Endothelial cell of umbilical vein (primary cell): ENCODE measurements at regions of chr11 and their contacts with region 1.

Region 1: DNA sequence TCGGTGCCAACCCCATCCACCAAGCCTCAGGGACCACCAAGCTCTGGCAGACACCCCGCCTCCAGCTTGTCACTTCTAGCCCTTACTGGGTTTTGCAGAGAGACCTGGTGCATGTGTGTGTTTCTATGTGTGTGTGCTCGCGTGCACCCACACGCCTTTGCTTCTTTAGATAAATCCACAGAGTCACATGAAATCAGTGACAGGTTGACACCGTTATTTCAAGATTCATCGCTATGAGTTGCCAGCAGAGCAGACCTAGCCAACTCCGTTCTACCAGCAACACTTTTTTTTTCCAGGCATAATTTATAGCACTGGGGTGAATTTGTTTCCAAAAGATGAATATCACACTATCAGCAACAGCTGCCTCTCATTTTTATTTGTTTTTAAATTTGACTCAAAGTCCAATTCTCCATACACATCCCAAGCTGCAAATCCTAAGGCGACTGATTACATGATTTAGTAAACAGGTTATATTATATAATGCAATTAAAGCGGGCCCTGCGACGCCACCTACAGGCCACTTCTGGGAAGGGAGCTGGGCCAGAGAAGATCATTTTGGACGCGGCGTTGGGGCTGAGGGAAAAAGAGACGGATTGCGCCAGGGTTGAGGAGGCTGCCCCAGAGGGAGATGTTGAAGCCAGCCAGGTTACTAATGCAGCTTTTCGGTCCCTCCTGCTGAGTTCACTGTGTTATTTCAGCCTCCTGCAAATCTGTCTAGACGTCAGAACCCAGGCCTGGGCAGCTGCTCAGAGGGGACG is 150.5 kb downstream of the FEZ1 start:
- DNase-seq: peak; percentile 67
- H3K4me3 ChIP-seq: no peak overlapping the region
- H3K27ac ChIP-seq: no peak overlapping the region
- H3K4me1 ChIP-seq: no peaks in the 10 kb centered on the region
- H3K27me3 ChIP-seq: no peaks in the 10 kb centered on the region
- CTCF ChIP-seq: peak; percentile 84 to 90
- POLR2A ChIP-seq: no peak

Region 2: DNA sequence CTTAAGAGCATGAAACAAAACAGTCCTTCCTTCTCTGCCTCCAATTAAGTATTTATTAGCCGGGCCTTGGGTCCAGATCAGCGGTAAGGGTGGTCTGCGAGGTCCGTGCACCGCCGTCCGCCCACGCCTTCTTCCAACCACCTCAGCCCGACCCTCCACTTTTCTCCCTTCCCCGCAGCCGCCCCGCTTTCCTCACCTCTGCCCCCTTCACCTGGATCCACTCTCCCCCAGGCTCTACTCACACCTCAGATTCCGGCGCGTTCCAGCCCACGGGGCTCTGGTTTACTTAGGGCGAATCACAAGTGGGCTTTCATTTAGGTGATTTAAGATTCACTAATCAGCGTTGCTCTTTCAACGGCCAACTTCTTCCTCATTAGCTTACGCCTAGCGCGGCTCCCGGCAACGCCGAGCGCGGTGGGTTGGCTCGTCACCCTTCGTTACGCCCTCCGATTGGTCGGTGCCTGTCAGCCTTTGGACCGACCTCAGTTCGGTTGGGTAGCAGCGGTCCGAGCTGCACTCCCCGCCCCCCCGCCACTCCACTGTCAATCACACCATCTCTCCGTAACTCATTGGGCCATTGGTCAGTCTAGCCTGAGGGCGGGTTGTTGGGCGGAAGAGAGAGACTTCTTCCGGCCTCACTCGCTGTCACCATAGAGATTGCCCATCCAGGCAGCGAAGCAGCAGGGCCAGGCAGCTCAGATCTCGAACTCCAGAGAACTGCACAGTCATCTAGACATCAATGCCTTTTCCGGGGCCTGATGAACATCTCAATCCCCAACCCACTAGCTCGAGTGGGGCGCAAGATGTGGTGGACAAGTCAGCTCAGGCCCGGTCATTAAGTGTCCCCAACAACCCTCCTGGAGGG is 234.0 kb before region 1 on chr11 and contains the start of gene TMEM218:
- CTCF ChIA-PET with region 1: interaction called, 15 read pairs
- POLR2A ChIA-PET with region 1: no interaction called
- dilution Hi-C with region 1: no loop called
- intact Hi-C with region 1: no loop called
- DNase-seq: peak; percentile 100
- H3K4me3 ChIP-seq: peak within 1 kb of the TSS; percentile 57 to 85 (median 72)
- H3K27ac ChIP-seq: peak within 1 kb of the TSS; percentile 10
- H3K4me1 ChIP-seq: peaks cover 6% of the 10 kb centered on the region
- H3K27me3 ChIP-seq: peaks cover 0 to 1% of the 10 kb centered on the region in 2 experiments
- CTCF ChIP-seq: no peak
- POLR2A ChIP-seq: no peak
- total RNA-seq, gene TMEM218: 17.9 and 23.8 TPM in 2 replicates

Region 3: GRCh38 chr11:125164422-125165110 is 181.0 kb before region 1 on chr11 and contains the start of gene PKNOX2:
- CTCF ChIA-PET with region 1: interaction called, 188 read pairs
- POLR2A ChIA-PET with region 1: no interaction called
- dilution Hi-C with region 1: no loop called
- intact Hi-C with region 1: loop called (anchors 1 kb)
- DNase-seq: peak; percentile 65
- H3K4me3 ChIP-seq: peak within 1 kb of the TSS; percentile 53 to 69 (median 63)
- H3K27ac ChIP-seq: no peak within 1 kb of the TSS
- H3K4me1 ChIP-seq: peaks cover 16% of the 10 kb centered on the region
- H3K27me3 ChIP-seq: peaks cover 32 to 35% of the 10 kb centered on the region in 2 experiments
- CTCF ChIP-seq: peak; percentile 36 to 82
- POLR2A ChIP-seq: no peak
- total RNA-seq, gene PKNOX2: 0.11 and 0.14 TPM in 2 replicates

Region 4: DNA sequence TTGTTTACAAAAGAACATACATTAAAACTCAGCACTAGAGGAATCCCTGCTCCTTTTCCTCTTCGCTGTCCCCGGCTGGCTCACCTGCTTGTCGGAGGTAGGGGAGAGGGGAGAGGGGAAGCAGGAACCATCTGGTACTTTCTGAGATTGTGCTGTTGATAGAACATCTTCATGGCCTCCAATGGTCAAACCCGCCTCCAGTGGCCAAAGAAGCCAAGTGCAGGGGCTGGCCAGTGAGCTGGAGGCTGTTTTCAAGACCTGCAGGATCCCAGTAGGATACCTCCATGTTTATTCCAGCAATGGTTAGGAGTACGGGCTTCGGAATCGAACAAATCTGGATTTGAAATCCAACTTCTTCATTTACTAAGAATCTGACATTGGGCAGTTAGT is 88.4 kb before region 1 on chr11:
- CTCF ChIA-PET with region 1: interaction called, 28 read pairs
- POLR2A ChIA-PET with region 1: no interaction called
- dilution Hi-C with region 1: no loop called
- intact Hi-C with region 1: loop called (anchors 5 kb)
- DNase-seq: peak; percentile 9
- H3K4me3 ChIP-seq: no peak overlapping the region
- H3K27ac ChIP-seq: no peak overlapping the region
- H3K4me1 ChIP-seq: no peaks in the 10 kb centered on the region
- H3K27me3 ChIP-seq: peaks cover 4 to 13% of the 10 kb centered on the region in 2 experiments
- CTCF ChIP-seq: peak in 1 of 2 donors; percentile 37
- POLR2A ChIP-seq: no peak

Region 5: DNA sequence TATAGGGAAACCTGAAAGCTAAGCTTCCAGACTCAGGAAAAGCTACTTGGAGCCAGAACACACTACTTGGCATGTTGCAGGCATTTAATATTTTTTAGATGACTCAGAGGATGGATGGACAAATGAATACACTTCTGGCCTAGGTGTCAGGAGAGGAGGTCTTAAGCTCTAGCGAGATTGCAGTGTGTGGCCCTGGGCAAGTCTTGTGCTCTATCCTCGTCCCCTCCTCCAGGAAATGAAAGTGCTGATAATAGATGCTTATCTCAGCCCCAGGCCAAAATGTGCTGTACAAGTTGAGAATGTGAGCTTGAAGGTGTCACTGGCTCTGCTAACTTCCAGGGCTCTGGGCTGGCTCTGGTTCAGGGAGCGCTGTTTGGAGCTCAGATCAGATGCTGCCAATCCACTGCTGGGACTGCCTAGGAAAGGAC is 44.8 kb before region 1 on chr11:
- CTCF ChIA-PET with region 1: interaction called, 39 read pairs
- POLR2A ChIA-PET with region 1: no interaction called
- dilution Hi-C with region 1: no loop called
- intact Hi-C with region 1: loop called (anchors 1 kb)
- DNase-seq: peak; percentile 80
- H3K4me3 ChIP-seq: no peak overlapping the region
- H3K27ac ChIP-seq: peak overlapping the region; percentile 68
- H3K4me1 ChIP-seq: peaks cover 42% of the 10 kb centered on the region
- H3K27me3 ChIP-seq: no peaks in the 10 kb centered on the region
- CTCF ChIP-seq: no peak
- POLR2A ChIP-seq: peak; percentile 31

Region 6: DNA sequence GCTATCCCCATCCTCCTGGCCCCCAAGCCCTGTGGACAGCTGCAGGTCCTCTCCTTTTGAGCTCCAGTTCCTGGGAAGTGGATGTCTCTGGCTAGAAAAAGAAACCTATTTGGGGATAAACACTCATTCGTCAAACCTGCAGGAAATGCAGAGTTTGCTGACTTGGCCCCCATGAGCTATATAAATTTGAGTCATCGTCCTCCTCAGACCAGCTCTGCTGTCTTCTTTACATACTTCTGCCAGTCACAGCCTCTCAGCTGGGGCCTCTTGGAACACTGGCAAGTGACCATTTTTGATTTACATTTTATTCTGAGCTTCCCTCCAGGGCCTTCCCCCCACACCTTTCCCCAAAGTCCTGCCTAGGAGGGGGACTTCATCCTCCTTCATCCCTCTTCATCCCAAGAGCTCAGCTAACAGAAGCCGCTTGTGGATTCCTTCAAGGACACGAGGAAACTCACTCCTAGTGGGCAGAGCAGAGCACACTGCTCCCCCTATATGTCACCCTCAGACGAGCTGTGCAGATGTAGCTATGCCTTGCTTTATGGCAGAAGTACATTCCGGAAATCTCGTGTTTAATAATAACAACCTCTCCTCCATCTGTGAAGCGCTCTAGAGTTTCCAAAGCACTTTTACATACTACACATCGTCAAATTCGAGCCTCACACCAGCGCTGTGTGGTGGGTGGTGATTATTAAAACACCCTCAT is 18.7 kb after region 1 on chr11:
- CTCF ChIA-PET with region 1: interaction called, 16 read pairs
- POLR2A ChIA-PET with region 1: no interaction called
- dilution Hi-C with region 1: no loop called
- intact Hi-C with region 1: no loop called
- DNase-seq: no peak
- H3K4me3 ChIP-seq: no peak overlapping the region
- H3K27ac ChIP-seq: no peak overlapping the region
- H3K4me1 ChIP-seq: peaks cover 4% of the 10 kb centered on the region
- H3K27me3 ChIP-seq: no peaks in the 10 kb centered on the region
- CTCF ChIP-seq: no peak
- POLR2A ChIP-seq: no peak

Region 7: DNA sequence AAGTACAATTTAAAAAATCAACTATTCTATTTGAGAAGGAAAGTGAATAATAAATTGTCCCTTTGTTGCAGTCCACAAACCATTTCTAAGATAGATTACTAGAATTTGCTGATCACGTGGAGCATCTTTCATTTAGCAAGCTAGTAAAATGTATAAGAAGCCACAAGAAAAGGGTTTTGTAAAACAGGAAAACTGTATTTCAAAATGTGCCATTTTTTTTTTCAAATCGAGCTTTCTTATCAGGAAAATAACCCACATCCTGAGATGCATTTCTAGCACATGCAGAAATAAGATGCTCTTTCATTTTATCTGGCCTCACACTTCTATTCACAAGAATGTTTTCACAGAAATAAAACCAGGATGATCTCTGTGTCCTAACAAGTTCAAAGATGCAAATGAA is 439.1 kb after region 1 on chr11:
- CTCF ChIA-PET with region 1: no interaction called
- POLR2A ChIA-PET with region 1: no interaction called
- dilution Hi-C with region 1: no loop called
- intact Hi-C with region 1: no loop called
- DNase-seq: no peak
- H3K4me3 ChIP-seq: no peak overlapping the region
- H3K27ac ChIP-seq: no peak overlapping the region
- H3K4me1 ChIP-seq: no peaks in the 10 kb centered on the region
- H3K27me3 ChIP-seq: no peaks in the 10 kb centered on the region
- CTCF ChIP-seq: no peak
- POLR2A ChIP-seq: no peak